ENCODE measurements at regions of chr6 and their contacts with region 1.

Region 1: GRCh38 chr6:29016559-29017427 is 11.7 kb upstream of the ZNF311 start:
- DNase-seq: peak; percentile 66
- H3K4me3 ChIP-seq: peak overlapping the region; percentile 53 to 57 (median 54)
- H3K27ac ChIP-seq: no peak overlapping the region
- H3K4me1 ChIP-seq: peaks cover 9% of the 10 kb centered on the region
- H3K27me3 ChIP-seq: no peaks in the 10 kb centered on the region
- CTCF ChIP-seq: peak; percentile 84 to 93

Region 2: GRCh38 chr6:28695715-28696114 is 321.1 kb before region 1 on chr6:
- CTCF ChIA-PET with region 1: no interaction called
- dilution Hi-C with region 1: no loop called
- in situ Hi-C with region 1: loop called (anchors 10 to 25 kb)
- intact Hi-C with region 1: no loop called
- DNase-seq: peak; percentile 64
- H3K4me3 ChIP-seq: no peak overlapping the region
- H3K27ac ChIP-seq: no peak overlapping the region
- H3K4me1 ChIP-seq: no peaks in the 10 kb centered on the region
- H3K27me3 ChIP-seq: no peaks in the 10 kb centered on the region
- CTCF ChIP-seq: no peak

Region 3: GRCh38 chr6:28769626-28770402 is 247.0 kb before region 1 on chr6:
- CTCF ChIA-PET with region 1: no interaction called
- dilution Hi-C with region 1: no loop called
- in situ Hi-C with region 1: no loop called
- intact Hi-C with region 1: loop called (anchors 1 kb)
- DNase-seq: peak; percentile 72
- H3K4me3 ChIP-seq: no peak overlapping the region
- H3K27ac ChIP-seq: no peak overlapping the region
- H3K4me1 ChIP-seq: no peaks in the 10 kb centered on the region
- H3K27me3 ChIP-seq: peaks cover 60% of the 10 kb centered on the region
- CTCF ChIP-seq: peak; percentile 31 to 60

Region 4: GRCh38 chr6:28923318-28924102 is 93.3 kb before region 1 on chr6 and contains the start of gene TRIM27:
- CTCF ChIA-PET with region 1: no interaction called
- dilution Hi-C with region 1: no loop called
- in situ Hi-C with region 1: no loop called
- intact Hi-C with region 1: loop called (anchors 1 kb)
- DNase-seq: peak; percentile 81
- H3K4me3 ChIP-seq: peak within 1 kb of the TSS; percentile 67 to 88 (median 73)
- H3K27ac ChIP-seq: peak within 1 kb of the TSS; percentile 82
- H3K4me1 ChIP-seq: peaks cover 19% of the 10 kb centered on the region
- H3K27me3 ChIP-seq: no peaks in the 10 kb centered on the region
- CTCF ChIP-seq: peak in 1 of 2 donors; percentile 2
- total RNA-seq, gene TRIM27: 45.3 to 49.2 TPM

Region 5: GRCh38 chr6:29301401-29301800 is 284.6 kb after region 1 on chr6 and contains the start of gene OR14J1:
- CTCF ChIA-PET with region 1: no interaction called
- dilution Hi-C with region 1: no loop called
- in situ Hi-C with region 1: no loop called
- intact Hi-C with region 1: no loop called
- DNase-seq: no peak
- H3K4me3 ChIP-seq: no peak within 1 kb of the TSS
- H3K27ac ChIP-seq: no peak within 1 kb of the TSS
- H3K4me1 ChIP-seq: no peaks in the 10 kb centered on the region
- H3K27me3 ChIP-seq: no peaks in the 10 kb centered on the region
- CTCF ChIP-seq: no peak
- total RNA-seq, gene OR14J1: not detected